ENCODE measurements at regions of chr7 and their contacts with region 1.

Region 1: GRCh38 chr7:137898839-137899721 is 52.3 kb upstream of the DGKI start:
- DNase-seq: no peak
- H3K4me3 ChIP-seq: no peak overlapping the region
- H3K27me3 ChIP-seq: no peaks in the 10 kb centered on the region
- CTCF ChIP-seq: peak; percentile 99

Region 2: GRCh38 chr7:137313201-137313600 is 585.9 kb before region 1 on chr7:
- CTCF ChIA-PET with region 1: no interaction called
- POLR2A ChIA-PET with region 1: no interaction called
- DNase-seq: no peak
- H3K4me3 ChIP-seq: no peak overlapping the region
- H3K27me3 ChIP-seq: no peaks in the 10 kb centered on the region
- CTCF ChIP-seq: no peak

Region 3: GRCh38 chr7:137606061-137606674 is 292.9 kb before region 1 on chr7:
- CTCF ChIA-PET with region 1: interaction called, 11 read pairs
- POLR2A ChIA-PET with region 1: no interaction called
- DNase-seq: peak; percentile 31
- H3K4me3 ChIP-seq: no peak overlapping the region
- H3K27me3 ChIP-seq: no peaks in the 10 kb centered on the region
- CTCF ChIP-seq: peak; percentile 22; the same call in 1 of the 2 replicates

Region 4: GRCh38 chr7:137916564-137916963 is 17.5 kb after region 1 on chr7:
- CTCF ChIA-PET with region 1: interaction called, 31 read pairs
- POLR2A ChIA-PET with region 1: no interaction called
- DNase-seq: no peak
- H3K4me3 ChIP-seq: no peak overlapping the region
- H3K27me3 ChIP-seq: no peaks in the 10 kb centered on the region
- CTCF ChIP-seq: no peak

Region 5: GRCh38 chr7:137992550-137993394 is 93.7 kb after region 1 on chr7:
- CTCF ChIA-PET with region 1: interaction called, 12 read pairs
- POLR2A ChIA-PET with region 1: no interaction called
- DNase-seq: peak; percentile 99
- H3K4me3 ChIP-seq: no peak overlapping the region; the same call in 1 of the 2 replicates
- H3K27me3 ChIP-seq: no peaks in the 10 kb centered on the region
- CTCF ChIP-seq: no peak

Measured in BJ (cell line).